WTC11 (cell line): ENCODE measurements at regions of chr2 and their contacts with region 1.

Region 1: GRCh38 chr2:62774555-62775366 is 69.2 kb downstream of the EHBP1 start:
- DNase-seq: no peak
- ATAC-seq: no peak
- H3K4me3 Mint-ChIP-seq: no peak overlapping the region
- H3K27ac Mint-ChIP-seq: no peak overlapping the region; the same call in 1 of the 2 replicates
- H3K4me1 Mint-ChIP-seq: peaks cover 14% of the 10 kb centered on the region
- H3K27me3 Mint-ChIP-seq: no peaks in the 10 kb centered on the region
- CTCF ChIP-seq: peak; percentile 35; the same call in 1 of the 2 replicates

Region 2: DNA sequence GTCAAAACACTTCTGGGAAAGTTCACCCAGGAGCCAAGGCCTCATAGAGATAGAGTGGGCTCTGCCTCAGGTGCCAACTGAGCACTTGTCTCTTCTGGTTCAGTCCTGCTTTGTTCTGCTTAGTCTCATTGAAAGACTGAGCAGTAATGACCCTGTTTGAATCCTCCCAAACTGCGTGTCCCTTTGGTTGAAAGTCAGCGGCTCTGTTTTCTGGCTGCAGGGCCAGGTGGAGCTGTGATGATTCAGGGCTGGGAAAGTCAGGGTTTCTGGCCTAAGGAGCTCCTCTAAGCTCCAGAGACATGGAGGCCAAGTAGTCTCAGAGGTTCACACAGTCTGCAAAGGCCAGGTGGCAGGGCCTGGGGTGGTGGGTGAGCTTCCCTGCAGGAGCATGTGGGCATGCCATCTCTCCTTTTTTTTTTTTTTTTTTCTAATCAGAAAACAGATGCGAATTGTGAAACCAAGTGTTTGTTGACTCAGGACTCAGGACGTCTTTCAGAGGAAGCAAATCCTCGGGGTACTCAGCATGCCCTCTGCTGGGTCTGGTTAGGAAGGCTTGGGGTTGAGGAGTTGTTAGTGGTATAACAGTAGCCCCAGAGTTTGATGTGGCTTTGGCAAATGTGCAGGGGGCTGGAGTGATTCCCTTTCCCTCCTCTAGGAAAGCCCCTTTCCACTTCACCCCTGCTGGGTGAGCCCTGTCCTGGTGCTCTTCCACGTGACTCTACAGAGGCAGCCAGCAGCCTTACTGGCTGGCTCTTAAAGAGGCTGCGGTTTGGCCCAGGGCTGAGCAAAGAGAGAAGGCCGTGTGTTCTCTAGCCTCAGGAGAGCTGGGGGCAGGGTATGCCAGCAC is 307.1 kb before region 1 on chr2:
- CTCF ChIA-PET with region 1: interaction called, 13 read pairs
- POLR2A ChIA-PET with region 1: no interaction called
- DNase-seq: no peak
- ATAC-seq: no peak
- H3K4me3 Mint-ChIP-seq: no peak overlapping the region
- H3K27ac Mint-ChIP-seq: peak overlapping the region; percentile 24; the same call in 1 of the 2 replicates
- H3K4me1 Mint-ChIP-seq: peaks cover 50% of the 10 kb centered on the region
- H3K27me3 Mint-ChIP-seq: no peaks in the 10 kb centered on the region
- CTCF ChIP-seq: no peak